Activated CD4-positive, alpha-beta T cell treated with anti-CD3 and anti-CD28 coated beads for 36 hours (primary cell): ENCODE measurements at regions of chr11 and their contacts with region 1.

Region 1: DNA sequence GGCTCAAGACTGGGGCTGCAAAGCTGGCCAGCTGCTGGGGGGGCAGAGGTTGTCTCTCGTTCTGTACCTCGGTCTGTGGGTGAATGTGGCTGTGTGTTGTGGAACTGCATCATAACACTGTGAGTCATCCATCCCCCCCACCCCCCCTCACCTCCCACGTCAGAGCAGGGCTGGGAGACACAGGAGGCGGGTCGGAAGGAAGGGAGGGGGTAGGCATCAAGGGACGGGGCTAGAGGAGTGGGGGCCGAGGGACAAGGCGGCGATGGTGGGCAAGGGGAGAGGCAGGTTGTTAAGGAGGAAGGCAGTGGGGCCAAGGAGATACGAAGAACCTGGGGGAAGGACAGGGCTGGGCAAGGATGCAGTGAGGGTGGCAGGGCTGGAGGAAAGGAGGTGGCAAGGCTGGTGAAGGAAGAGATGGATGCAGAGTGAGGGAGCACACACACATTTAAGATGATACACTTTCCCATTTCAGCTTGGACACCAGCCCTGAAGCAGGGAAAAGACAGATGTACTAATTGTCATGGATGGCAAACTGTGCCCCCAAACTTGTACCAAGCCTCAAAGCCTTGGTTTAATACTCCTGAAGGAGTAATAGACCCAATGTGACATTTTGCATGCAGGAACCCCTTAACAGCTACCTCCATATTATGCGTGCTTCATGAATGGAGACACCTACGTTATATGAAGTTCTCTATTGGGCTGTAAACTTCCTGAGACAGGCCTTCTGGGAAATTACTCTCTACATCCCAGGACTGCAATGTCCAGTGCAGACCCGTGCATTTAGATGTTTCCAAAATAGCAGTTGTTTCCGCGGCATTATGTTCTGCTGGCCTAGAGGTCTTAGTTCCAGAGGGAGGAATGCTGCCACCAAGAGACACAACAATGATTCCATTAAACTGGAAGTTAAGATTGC is at the start of gene YPEL4:
- DNase-seq: peak; percentile 76
- ATAC-seq: peak; percentile 75
- H3K4me3 Mint-ChIP-seq: peak within 1 kb of the TSS; percentile 68
- H3K27ac Mint-ChIP-seq: peak within 1 kb of the TSS; percentile 52
- H3K4me1 Mint-ChIP-seq: peaks cover 43% of the 10 kb centered on the region
- H3K27me3 Mint-ChIP-seq: peaks cover 39% of the 10 kb centered on the region
- total RNA-seq, gene YPEL4: 0.43 to 0.47 TPM

Region 2: DNA sequence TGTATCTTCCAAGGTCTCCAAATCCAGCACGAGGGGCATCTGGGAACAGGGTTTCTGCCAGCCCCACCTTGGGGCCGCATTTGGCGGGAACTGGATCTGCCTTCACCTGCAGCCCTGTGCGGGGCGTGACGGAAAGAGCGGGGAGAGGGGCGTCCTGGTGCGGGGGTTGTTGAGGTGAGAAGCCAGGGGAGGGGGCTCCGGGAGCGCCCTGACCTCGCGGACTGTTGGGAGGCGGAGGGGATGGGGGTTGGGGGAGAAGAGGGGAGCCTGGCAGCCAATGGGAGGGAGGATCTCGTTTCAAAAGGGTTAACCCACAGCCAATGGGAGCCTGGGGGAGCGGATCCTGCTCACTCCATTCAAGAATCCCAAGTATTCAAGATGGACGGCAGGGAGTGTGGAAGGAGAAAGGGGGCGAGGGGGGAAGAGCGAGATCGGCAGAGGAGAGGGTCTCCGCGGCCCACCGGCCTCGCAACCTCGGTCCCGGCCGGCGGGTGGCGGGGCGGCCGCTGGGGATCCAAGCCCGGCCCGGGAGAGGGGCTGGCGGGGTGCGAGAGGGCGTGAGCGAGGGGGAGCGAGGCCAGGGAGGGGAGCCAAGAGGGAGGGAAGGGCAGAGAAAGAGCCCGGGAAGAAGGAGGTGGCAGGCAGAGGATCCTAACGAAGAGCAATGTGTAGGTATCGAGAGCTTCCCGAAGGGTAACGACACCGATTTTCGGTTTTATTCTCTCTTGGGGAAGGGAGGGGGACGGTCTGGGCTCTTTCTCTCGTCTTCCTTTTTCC is 11.9 kb before region 1 on chr11:
- CTCF ChIA-PET with region 1: interaction called, 10 read pairs
- POLR2A ChIA-PET with region 1: no interaction called
- intact Hi-C with region 1: no loop called
- DNase-seq: peak; percentile 41
- ATAC-seq: peak; percentile 60
- H3K4me3 Mint-ChIP-seq: peak overlapping the region; percentile 82
- H3K27ac Mint-ChIP-seq: peak overlapping the region; percentile 42
- H3K4me1 Mint-ChIP-seq: peaks cover 10% of the 10 kb centered on the region
- H3K27me3 Mint-ChIP-seq: peaks cover 11% of the 10 kb centered on the region